ENCODE measurements at regions of chr3 and their contacts with region 1.

Region 1: GRCh38 chr3:57983734-57984518 is 24.3 kb upstream of the FLNB start:
- DNase-seq: peak; percentile 52
- H3K4me3 Mint-ChIP-seq: peak overlapping the region; percentile 6
- H3K27ac Mint-ChIP-seq: peak overlapping the region; percentile 90
- H3K4me1 Mint-ChIP-seq: peaks cover 22% of the 10 kb centered on the region
- H3K27me3 Mint-ChIP-seq: no peaks in the 10 kb centered on the region

Region 2: GRCh38 chr3:58000306-58001083 is 16.6 kb after region 1 on chr3:
- intact Hi-C with region 1: no loop called
- DNase-seq: no peak
- H3K4me3 Mint-ChIP-seq: no peak overlapping the region
- H3K27ac Mint-ChIP-seq: no peak overlapping the region
- H3K4me1 Mint-ChIP-seq: peaks cover 22% of the 10 kb centered on the region
- H3K27me3 Mint-ChIP-seq: peaks cover under 1% of the 10 kb centered on the region

Region 3: GRCh38 chr3:58034738-58035523 is 51.0 kb after region 1 on chr3:
- intact Hi-C with region 1: loop called (anchors 2 kb)
- DNase-seq: peak; percentile 66
- H3K4me3 Mint-ChIP-seq: peak overlapping the region; percentile 78
- H3K27ac Mint-ChIP-seq: peak overlapping the region; percentile 85
- H3K4me1 Mint-ChIP-seq: peaks cover 51% of the 10 kb centered on the region
- H3K27me3 Mint-ChIP-seq: peaks cover 7% of the 10 kb centered on the region

Region 4: GRCh38 chr3:58553003-58553402 is 569.1 kb after region 1 on chr3:
- intact Hi-C with region 1: loop called (anchors 5 kb)
- DNase-seq: no peak
- H3K4me3 Mint-ChIP-seq: no peak overlapping the region
- H3K27ac Mint-ChIP-seq: no peak overlapping the region
- H3K4me1 Mint-ChIP-seq: no peaks in the 10 kb centered on the region
- H3K27me3 Mint-ChIP-seq: peaks cover 6% of the 10 kb centered on the region